Activated T-helper 1 cell treated with anti-CD3 and anti-CD28 coated beads, Interleukin-12 subunit alpha, Interleukin-12 subunit beta, Interleukin-2, Interleukin-4 antibody, amounts not matched to agents 30 ng/mL and 10 ng/mL and 1 ng/mL, durations not matched to agents 14 hours and 24 hours and 36 hours (primary cell): ENCODE measurements at regions of chr15 and their contacts with region 1.

Region 1: GRCh38 chr15:90143166-90143655 is 40.9 kb upstream of the IDH2 start:
- DNase-seq: peak; percentile 59
- H3K4me3 Mint-ChIP-seq: peak overlapping the region; percentile 1
- H3K27ac Mint-ChIP-seq: peak overlapping the region; percentile 52
- H3K4me1 Mint-ChIP-seq: peaks cover 26% of the 10 kb centered on the region
- H3K27me3 Mint-ChIP-seq: no peaks in the 10 kb centered on the region

Region 2: DNA sequence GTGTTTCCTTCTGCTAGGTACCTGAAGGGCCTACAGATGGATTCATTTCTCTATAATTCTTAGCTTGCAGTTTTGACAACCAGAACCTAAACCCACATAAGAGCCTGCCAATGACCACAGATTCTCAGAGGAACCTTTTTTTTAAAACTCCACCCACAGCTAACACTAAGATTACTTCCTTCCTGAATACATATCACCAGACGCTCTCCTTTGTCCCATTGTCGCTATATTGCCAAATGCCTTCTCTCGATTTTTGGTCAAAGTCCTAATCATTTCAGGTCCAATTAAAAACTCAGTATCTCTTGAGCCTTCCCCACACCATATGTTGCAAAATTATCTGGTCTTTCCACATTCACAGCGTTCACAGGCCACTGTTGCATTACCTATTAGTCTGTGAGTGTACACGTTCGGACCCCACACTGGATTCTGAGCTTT is 129.7 kb before region 1 on chr15:
- intact Hi-C with region 1: no loop called
- DNase-seq: peak; percentile 36
- H3K4me3 Mint-ChIP-seq: peak overlapping the region; percentile 27
- H3K27ac Mint-ChIP-seq: peak overlapping the region; percentile 61
- H3K4me1 Mint-ChIP-seq: peaks cover 50% of the 10 kb centered on the region
- H3K27me3 Mint-ChIP-seq: no peaks in the 10 kb centered on the region

Region 3: DNA sequence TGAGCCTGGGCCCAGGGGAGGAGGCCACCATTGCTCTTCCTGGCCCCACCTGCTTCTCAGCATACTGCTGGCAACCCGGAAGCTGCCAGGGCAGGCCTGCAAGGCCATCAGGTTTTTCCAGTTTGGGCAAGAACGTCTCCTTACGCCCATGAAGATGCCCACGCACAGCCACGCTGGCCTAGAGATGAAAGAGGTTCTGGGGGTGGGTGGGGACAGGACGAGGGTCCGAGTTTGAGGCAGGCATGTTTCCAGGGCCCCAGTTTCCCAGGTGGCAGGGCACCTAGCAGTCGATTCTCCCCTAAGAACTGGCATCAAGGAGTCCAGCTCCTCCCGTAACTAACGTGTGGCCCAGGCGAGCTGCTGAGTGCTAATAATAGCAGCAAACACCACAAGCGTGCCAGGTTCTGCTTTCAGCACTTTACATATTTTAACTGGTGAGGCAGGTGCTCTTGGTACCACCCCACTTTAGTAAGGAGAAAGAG is 96.3 kb before region 1 on chr15:
- intact Hi-C with region 1: no loop called
- DNase-seq: no peak
- H3K4me3 Mint-ChIP-seq: no peak overlapping the region
- H3K27ac Mint-ChIP-seq: no peak overlapping the region
- H3K4me1 Mint-ChIP-seq: peaks cover 6% of the 10 kb centered on the region
- H3K27me3 Mint-ChIP-seq: no peaks in the 10 kb centered on the region

Region 4: GRCh38 chr15:90126457-90127435 is 16.5 kb before region 1 on chr15:
- intact Hi-C with region 1: no loop called
- DNase-seq: no peak
- H3K4me3 Mint-ChIP-seq: no peak overlapping the region
- H3K27ac Mint-ChIP-seq: no peak overlapping the region
- H3K4me1 Mint-ChIP-seq: peaks cover 14% of the 10 kb centered on the region
- H3K27me3 Mint-ChIP-seq: peaks cover 9% of the 10 kb centered on the region

Region 5: GRCh38 chr15:90219421-90220166 is 76.4 kb after region 1 on chr15:
- intact Hi-C with region 1: loop called (anchors 1 kb)
- DNase-seq: no peak
- H3K4me3 Mint-ChIP-seq: no peak overlapping the region
- H3K27ac Mint-ChIP-seq: no peak overlapping the region
- H3K4me1 Mint-ChIP-seq: peaks cover 10% of the 10 kb centered on the region
- H3K27me3 Mint-ChIP-seq: no peaks in the 10 kb centered on the region

Region 6: GRCh38 chr15:90300988-90301706 is 157.9 kb after region 1 on chr15:
- intact Hi-C with region 1: loop called (anchors 1 kb)
- DNase-seq: peak; percentile 47
- H3K4me3 Mint-ChIP-seq: no peak overlapping the region
- H3K27ac Mint-ChIP-seq: peak overlapping the region; percentile 61
- H3K4me1 Mint-ChIP-seq: peaks cover 29% of the 10 kb centered on the region
- H3K27me3 Mint-ChIP-seq: peaks cover 9% of the 10 kb centered on the region